ENCODE measurements at regions of chr5 and their contacts with region 1.

Region 1: GRCh38 chr5:122704243-122705036 is 70.4 kb upstream of the SNX2 start:
- DNase-seq: peak; percentile 67
- ATAC-seq: peak; percentile 87
- H3K4me3 ChIP-seq: no peak overlapping the region
- H3K27ac ChIP-seq: no peak overlapping the region
- H3K4me1 ChIP-seq: no peaks in the 10 kb centered on the region
- H3K27me3 ChIP-seq: peaks cover 2% of the 10 kb centered on the region; the same call in 1 of the 2 replicates
- CTCF ChIP-seq: peak; percentile 67
- POLR2A ChIP-seq: no peak
- RAD21 ChIP-seq: peak; percentile 58

Region 2: GRCh38 chr5:122532035-122532434 is 172.4 kb before region 1 on chr5:
- CTCF ChIA-PET with region 1: no interaction called
- POLR2A ChIA-PET with region 1: no interaction called
- dilution Hi-C with region 1: no loop called
- in situ Hi-C with region 1: no loop called
- intact Hi-C with region 1: loop called (anchors 10 kb)
- DNase-seq: no peak
- ATAC-seq: no peak
- H3K4me3 ChIP-seq: no peak overlapping the region
- H3K27ac ChIP-seq: no peak overlapping the region
- H3K4me1 ChIP-seq: no peaks in the 10 kb centered on the region
- H3K27me3 ChIP-seq: peaks cover 2% of the 10 kb centered on the region; the same call in 1 of the 2 replicates
- CTCF ChIP-seq: no peak
- POLR2A ChIP-seq: no peak
- RAD21 ChIP-seq: no peak

Region 3: GRCh38 chr5:122845229-122846050 is 141.0 kb after region 1 on chr5 and contains the start of gene SNX24:
- CTCF ChIA-PET with region 1: interaction called, 4 read pairs
- POLR2A ChIA-PET with region 1: no interaction called
- dilution Hi-C with region 1: no loop called
- in situ Hi-C with region 1: no loop called
- intact Hi-C with region 1: loop called (anchors 10 kb)
- DNase-seq: peak; percentile 56
- ATAC-seq: peak; percentile 96
- H3K4me3 ChIP-seq: peak within 1 kb of the TSS; percentile 98
- H3K27ac ChIP-seq: peak within 1 kb of the TSS; percentile 87
- H3K4me1 ChIP-seq: peaks cover 5% of the 10 kb centered on the region
- H3K27me3 ChIP-seq: no peaks in the 10 kb centered on the region
- CTCF ChIP-seq: no peak
- POLR2A ChIP-seq: peak; percentile 53; the same call in 1 of the 2 replicates
- RAD21 ChIP-seq: no peak
- total RNA-seq, gene SNX24: 13.8 and 21.7 TPM in 2 replicates

Region 4: GRCh38 chr5:123344816-123345426 is 640.5 kb after region 1 on chr5:
- CTCF ChIA-PET with region 1: interaction called, 4 read pairs
- POLR2A ChIA-PET with region 1: no interaction called
- dilution Hi-C with region 1: no loop called
- in situ Hi-C with region 1: no loop called
- intact Hi-C with region 1: loop called (anchors 10 kb)
- DNase-seq: peak; percentile 52
- ATAC-seq: peak; percentile 79
- H3K4me3 ChIP-seq: no peak overlapping the region
- H3K27ac ChIP-seq: no peak overlapping the region
- H3K4me1 ChIP-seq: no peaks in the 10 kb centered on the region
- H3K27me3 ChIP-seq: no peaks in the 10 kb centered on the region
- CTCF ChIP-seq: peak; percentile 83
- POLR2A ChIP-seq: no peak
- RAD21 ChIP-seq: peak; percentile 71

Measured in IMR-90 (cell line).